Activated T-helper 1 cell treated with anti-CD3 and anti-CD28 coated beads, Interleukin-12 subunit alpha, Interleukin-12 subunit beta, Interleukin-2, Interleukin-4 antibody, amounts not matched to agents 30 ng/mL and 10 ng/mL and 1 ng/mL, durations not matched to agents 14 hours and 24 hours and 36 hours (primary cell): ENCODE measurements at regions of chr19 and their contacts with region 1.

Region 1: DNA sequence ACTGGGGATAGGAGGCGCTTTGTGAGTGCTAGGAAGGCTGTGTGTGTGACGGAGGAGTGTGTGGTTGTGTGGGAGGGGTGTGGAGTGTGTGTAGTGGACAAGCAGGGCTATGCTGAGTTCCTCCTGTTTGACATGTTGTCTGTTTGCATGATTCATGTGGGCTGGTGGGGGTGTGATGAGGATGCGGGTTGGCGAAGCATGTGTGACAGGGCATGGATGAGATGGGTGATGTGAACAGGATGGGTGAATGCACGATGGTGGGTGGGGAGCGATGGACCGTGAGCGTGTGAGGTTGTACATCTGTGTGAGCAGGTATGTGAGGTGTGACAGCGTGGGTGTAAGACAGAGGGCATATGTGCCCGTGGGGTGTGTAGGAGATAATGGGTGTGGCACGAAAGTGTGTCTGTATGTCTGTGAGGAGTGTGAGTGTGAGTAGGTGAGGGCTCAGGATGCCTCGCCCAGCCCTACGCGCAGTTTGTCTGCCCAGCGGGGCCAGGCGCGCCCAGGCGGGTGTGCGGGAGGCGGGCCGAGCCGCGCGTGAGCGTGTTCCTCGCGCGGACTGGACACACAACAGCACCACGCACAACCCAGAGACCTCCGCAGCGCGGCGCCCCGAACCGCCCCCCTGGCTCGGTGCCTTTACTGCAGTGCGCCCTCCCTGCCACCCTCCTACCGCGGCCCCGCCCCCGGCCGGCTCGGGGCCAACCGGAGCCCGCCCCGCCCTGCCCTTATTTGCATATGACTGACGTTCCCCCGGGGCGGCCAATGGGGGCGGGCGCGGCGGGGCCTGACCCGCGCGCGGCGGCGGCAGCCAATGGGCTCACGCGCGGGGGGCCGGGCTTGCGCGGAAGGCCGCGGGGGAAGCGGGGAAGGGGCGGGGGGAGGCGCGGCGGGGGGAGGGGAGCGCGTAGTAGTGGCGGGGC is 14.4 kb downstream of the CIC start:
- DNase-seq: peak; percentile 92
- H3K4me3 Mint-ChIP-seq: no peak overlapping the region
- H3K27ac Mint-ChIP-seq: no peak overlapping the region
- H3K4me1 Mint-ChIP-seq: peaks cover 47% of the 10 kb centered on the region
- H3K27me3 Mint-ChIP-seq: no peaks in the 10 kb centered on the region

Region 2: DNA sequence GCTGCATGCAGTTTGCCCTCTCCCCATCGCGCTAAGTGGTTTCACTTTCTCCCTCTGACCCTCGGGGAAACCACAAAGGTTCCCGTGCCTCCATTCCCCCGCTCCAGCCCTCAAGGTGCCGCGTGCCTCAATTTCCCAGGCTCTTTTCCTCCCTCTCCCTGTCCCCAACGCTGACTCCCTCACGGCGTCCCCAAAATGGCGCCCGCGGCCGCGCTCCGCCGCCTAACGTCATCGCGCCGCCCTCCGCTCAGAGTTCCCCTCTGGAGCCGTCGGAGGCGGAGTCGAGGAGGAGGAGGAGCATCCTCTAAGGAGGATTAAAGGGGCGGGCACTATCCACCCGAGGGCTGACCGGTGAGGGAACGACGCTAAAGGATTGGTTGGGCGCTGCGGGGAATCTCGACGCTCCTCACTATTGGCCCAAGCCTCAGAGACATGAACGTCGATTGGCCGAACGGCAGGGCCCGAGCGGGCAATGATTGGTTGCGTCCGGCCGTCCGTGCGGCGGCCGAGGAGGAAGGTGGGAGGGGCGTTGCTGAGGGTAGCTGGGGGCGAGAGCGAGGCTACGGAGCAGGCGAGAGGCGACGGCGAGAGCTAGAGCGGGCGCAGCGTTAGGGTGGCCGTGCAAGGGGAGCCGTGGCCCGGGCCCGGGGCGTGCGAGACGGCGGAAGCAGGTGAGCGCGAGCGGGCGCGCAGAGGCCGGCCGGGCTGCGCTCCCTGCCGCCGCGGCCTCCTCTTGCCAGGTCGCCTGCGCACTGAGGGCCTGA is 207.6 kb before region 1 on chr19 and contains the start of gene ZNF574:
- intact Hi-C with region 1: loop called (anchors 5 kb)
- DNase-seq: peak; percentile 97
- H3K4me3 Mint-ChIP-seq: peak within 1 kb of the TSS; percentile 97
- H3K27ac Mint-ChIP-seq: peak within 1 kb of the TSS; percentile 99
- H3K4me1 Mint-ChIP-seq: peaks cover 37% of the 10 kb centered on the region
- H3K27me3 Mint-ChIP-seq: peaks cover 1% of the 10 kb centered on the region
- total RNA-seq, gene ZNF574: 17.5 and 17.8 TPM in 2 replicates

Region 3: DNA sequence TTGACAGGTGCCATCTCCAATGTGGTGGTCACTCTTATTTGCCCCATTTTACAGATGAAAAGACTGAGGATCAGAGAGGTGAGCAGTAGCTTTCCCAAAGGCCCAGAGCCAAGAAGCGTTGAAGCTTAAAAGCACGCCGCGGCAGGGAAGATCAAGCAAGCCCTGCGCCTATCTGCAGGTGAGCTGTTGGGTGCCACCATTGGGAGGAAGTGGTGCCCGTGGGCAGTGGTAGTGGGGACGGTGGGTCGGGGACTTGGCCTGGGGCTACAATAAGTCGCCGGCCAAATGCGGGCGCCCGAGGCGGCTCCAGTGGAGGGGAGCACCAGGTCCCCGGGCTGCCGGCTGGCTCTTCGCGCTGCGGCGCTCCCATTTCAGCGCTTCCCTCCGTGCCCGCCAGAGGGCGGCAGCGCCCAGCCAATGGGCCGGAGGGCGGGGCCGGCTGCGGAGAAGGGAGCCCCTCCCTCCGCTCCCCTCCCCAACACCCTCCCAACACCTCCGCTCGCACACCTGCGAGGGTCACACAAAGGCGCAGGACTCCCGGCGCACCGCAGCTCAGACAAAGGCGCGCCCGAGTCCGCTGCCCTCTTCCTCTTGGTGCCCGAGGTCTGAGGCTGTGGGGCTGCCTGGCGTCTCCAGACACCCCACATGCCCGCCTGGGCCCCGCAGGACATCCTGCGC is 150.4 kb before region 1 on chr19:
- intact Hi-C with region 1: loop called (anchors 1 kb)
- DNase-seq: peak; percentile 85
- H3K4me3 Mint-ChIP-seq: peak overlapping the region; percentile 93
- H3K27ac Mint-ChIP-seq: peak overlapping the region; percentile 91
- H3K4me1 Mint-ChIP-seq: peaks cover 61% of the 10 kb centered on the region
- H3K27me3 Mint-ChIP-seq: no peaks in the 10 kb centered on the region

Region 4: DNA sequence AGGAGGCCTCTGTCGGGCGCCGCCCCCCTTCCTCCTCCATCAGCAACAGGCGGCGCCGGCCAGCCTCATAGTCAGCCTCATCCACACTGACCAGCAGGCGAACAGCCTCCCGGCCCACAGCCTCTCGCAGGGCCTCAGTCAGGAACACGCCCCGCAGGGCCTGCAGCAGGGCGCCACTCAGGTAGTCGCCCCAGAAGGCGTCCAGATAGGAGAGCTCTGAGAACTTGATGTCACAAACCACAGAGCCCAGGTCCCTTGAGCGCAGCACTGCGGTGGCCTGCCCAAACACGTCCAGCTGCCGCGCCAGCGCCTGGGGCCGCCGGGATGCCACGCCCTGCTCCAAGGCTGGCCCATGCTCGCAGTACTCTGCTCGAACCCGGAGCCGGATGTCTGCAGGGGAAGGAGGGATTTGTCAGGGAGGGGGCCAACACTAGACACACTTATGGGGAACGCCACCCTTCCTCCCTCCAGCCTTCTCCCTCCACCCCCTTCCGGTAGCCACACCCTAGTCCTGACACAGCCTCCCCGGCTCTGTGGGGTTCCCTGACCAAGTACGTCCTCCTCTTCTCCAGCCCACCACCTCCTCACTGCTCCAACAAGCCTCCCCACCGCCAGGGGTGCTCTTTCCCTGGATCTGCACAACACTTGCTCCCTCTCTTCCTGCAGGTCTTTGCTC is 83.8 kb before region 1 on chr19:
- intact Hi-C with region 1: loop called (anchors 5 kb)
- DNase-seq: peak; percentile 75
- H3K4me3 Mint-ChIP-seq: peak overlapping the region; percentile 77
- H3K27ac Mint-ChIP-seq: peak overlapping the region; percentile 92
- H3K4me1 Mint-ChIP-seq: peaks cover 83% of the 10 kb centered on the region
- H3K27me3 Mint-ChIP-seq: no peaks in the 10 kb centered on the region

Region 5: GRCh38 chr19:42268704-42269477 is 14.5 kb before region 1 on chr19 and contains the start of gene CIC:
- intact Hi-C with region 1: loop called (anchors 1 kb)
- DNase-seq: peak; percentile 99
- H3K4me3 Mint-ChIP-seq: no peak within 1 kb of the TSS
- H3K27ac Mint-ChIP-seq: peak within 1 kb of the TSS; percentile 99
- H3K4me1 Mint-ChIP-seq: peaks cover 30% of the 10 kb centered on the region
- H3K27me3 Mint-ChIP-seq: no peaks in the 10 kb centered on the region
- total RNA-seq, gene CIC: 66.9 and 68.0 TPM in 2 replicates

Region 6: GRCh38 chr19:42325273-42325895 is 42.0 kb after region 1 on chr19 and contains the start of gene MEGF8:
- intact Hi-C with region 1: loop called (anchors 1 kb)
- DNase-seq: peak; percentile 98
- H3K4me3 Mint-ChIP-seq: peak within 1 kb of the TSS; percentile 90
- H3K27ac Mint-ChIP-seq: peak within 1 kb of the TSS; percentile 53
- H3K4me1 Mint-ChIP-seq: peaks cover 15% of the 10 kb centered on the region
- H3K27me3 Mint-ChIP-seq: peaks cover 32% of the 10 kb centered on the region
- total RNA-seq, gene MEGF8: 7.5 and 7.8 TPM in 2 replicates